Prostate gland (tissue), 2 donors: ENCODE measurements at regions of chr12 and their contacts with region 1.

Region 1: DNA sequence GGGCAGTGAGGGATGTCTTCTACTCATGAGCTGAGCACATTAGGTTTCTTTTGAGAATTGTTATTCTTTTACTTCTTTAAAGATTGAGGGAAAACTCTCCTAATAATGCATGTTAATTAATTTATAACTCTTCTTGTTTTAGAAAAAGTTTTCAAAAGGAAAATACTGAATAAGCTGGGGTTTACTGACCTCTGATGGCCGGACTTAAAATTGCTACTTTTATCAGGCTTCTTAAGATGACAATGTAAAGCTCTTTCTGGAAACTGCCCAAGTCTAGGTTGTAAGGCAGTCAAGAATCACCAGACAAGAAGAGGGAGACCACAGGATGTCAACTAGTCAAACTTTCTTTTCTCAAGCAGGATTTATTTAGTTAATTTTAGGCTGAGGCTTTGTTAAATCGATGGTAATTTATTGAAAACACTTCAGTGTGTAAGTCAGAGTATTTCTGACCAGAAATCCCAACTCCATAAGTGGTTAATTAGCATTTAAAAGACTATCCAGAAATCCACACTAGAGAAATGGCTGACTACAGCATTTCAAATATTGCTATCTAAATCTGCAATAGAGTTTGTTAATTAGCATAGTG is 82.1 kb downstream of the AVPR1A start:
- DNase-seq: peak; percentile 46
- H3K4me3 ChIP-seq: no peak overlapping the region
- H3K27ac ChIP-seq: no peak overlapping the region
- H3K4me1 ChIP-seq: no peaks in the 10 kb centered on the region
- H3K27me3 ChIP-seq: no peaks in the 10 kb centered on the region
- CTCF ChIP-seq: peak; percentile 13 to 60 (median 52)
- POLR2A ChIP-seq: no peak

Region 2: DNA sequence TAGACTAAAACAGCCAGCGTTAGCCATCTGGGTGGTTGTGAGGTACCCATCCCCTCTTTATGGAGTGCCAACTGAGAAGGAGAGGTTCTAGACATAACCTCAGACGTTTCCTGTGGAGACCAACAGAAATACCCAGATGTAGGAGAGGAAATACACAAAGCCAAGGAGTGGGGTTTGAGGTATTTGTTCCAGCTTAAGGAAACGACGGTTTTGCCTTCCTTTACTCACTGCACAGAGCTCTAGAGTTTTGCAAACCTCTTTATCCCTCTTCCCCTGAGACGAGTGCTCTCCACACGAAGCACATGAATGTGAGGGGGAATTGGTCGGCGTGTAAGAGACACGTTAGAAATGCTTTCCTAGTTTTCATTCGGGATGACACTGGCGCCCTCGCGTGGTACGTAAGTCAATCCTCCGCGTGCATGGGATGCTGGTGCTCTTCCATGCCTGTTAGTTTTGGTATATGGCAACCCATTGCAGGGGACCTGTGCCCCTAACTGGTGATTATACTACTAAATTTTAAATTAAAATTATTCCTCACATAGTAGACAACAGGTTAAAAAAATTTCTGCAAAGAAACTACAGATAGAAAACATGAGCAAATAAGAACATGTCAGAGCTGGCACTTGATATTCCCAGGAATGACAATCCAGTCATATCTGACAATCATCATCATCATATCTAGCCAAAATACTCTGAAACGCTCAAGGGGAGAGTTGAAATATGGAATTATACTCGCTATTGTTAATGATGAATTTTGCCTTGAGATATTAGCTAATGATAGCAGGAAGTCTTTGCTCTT is 255.7 kb before region 1 on chr12:
- intact Hi-C with region 1: loop called (anchors 10 kb)
- DNase-seq: peak; percentile 31
- H3K4me3 ChIP-seq: no peak overlapping the region
- H3K27ac ChIP-seq: no peak overlapping the region
- H3K4me1 ChIP-seq: no peaks in the 10 kb centered on the region
- H3K27me3 ChIP-seq: no peaks in the 10 kb centered on the region
- CTCF ChIP-seq: peak; percentile 18 to 42 (median 28)
- POLR2A ChIP-seq: no peak

Region 3: DNA sequence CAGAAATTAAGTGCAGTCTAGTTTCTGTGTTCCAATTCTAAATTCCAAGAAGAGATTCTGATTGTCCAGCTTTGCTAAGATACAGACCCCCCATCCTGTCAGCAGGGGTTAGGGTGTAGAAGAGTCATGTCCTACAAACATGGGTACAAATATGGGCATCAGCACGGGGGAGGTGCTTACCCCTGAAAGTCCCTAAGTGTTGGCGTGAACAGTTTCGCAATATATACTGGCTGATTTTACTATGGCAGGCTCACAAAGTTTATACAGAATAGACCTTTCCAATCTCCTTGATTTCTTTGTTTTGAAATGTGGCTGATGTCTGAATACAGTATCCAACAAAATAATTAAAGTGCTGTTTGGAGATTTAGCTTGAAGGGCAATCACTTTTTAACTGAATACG is 62.4 kb before region 1 on chr12:
- intact Hi-C with region 1: no loop called
- DNase-seq: no peak
- H3K4me3 ChIP-seq: no peak overlapping the region
- H3K27ac ChIP-seq: no peak overlapping the region
- H3K4me1 ChIP-seq: no peaks in the 10 kb centered on the region
- H3K27me3 ChIP-seq: no peaks in the 10 kb centered on the region
- CTCF ChIP-seq: no peak
- POLR2A ChIP-seq: no peak